ENCODE measurements at regions of chr15 and their contacts with region 1.

Region 1: GRCh38 chr15:57751177-57751800 is 44.8 kb downstream of the POLR2M start:
- DNase-seq: no peak
- ATAC-seq: peak; percentile 63
- H3K4me3 ChIP-seq: no peak overlapping the region
- H3K27ac ChIP-seq: no peak overlapping the region
- H3K4me1 ChIP-seq: no peaks in the 10 kb centered on the region
- H3K27me3 ChIP-seq: no peaks in the 10 kb centered on the region
- CTCF ChIP-seq: peak; percentile 51 to 62 (median 60); a peak in 5 of 6 replicates
- POLR2A ChIP-seq: no peak
- RAD21 ChIP-seq: peak; percentile 71

Region 2: GRCh38 chr15:58077427-58077826 is 326.1 kb after region 1 on chr15:
- CTCF ChIA-PET with region 1: interaction called, 12 read pairs
- POLR2A ChIA-PET with region 1: interaction called, 4 read pairs
- RAD21 ChIA-PET with region 1: no interaction called
- intact Hi-C with region 1: no loop called
- DNase-seq: peak; percentile 18
- ATAC-seq: peak; percentile 90
- H3K4me3 ChIP-seq: no peak overlapping the region
- H3K27ac ChIP-seq: no peak overlapping the region
- H3K4me1 ChIP-seq: no peaks in the 10 kb centered on the region
- H3K27me3 ChIP-seq: no peaks in the 10 kb centered on the region
- CTCF ChIP-seq: peak; percentile 29 to 52 (median 43); a peak in 5 of 6 replicates
- POLR2A ChIP-seq: no peak
- RAD21 ChIP-seq: peak; percentile 62